H1 (cell line): ENCODE measurements at regions of chr17 and their contacts with region 1.

Region 1: GRCh38 chr17:57747221-57748017 is 2.3 kb upstream of the CCDC182 start:
- DNase-seq: no peak
- H3K4me3 ChIP-seq: no peak overlapping the region
- H3K27ac ChIP-seq: no peak overlapping the region
- H3K4me1 ChIP-seq: peaks cover 0 to 2% (median 0%) of the 10 kb centered on the region in 4 experiments; a peak in 1 of 7 replicates
- H3K27me3 ChIP-seq: no peaks in the 10 kb centered on the region
- CTCF ChIP-seq: peak; percentile 48 to 76 (median 69)
- EP300 ChIP-seq: no peak
- POLR2A ChIP-seq: no peak
- RAD21 ChIP-seq: peak; percentile 88 to 89

Region 2: DNA sequence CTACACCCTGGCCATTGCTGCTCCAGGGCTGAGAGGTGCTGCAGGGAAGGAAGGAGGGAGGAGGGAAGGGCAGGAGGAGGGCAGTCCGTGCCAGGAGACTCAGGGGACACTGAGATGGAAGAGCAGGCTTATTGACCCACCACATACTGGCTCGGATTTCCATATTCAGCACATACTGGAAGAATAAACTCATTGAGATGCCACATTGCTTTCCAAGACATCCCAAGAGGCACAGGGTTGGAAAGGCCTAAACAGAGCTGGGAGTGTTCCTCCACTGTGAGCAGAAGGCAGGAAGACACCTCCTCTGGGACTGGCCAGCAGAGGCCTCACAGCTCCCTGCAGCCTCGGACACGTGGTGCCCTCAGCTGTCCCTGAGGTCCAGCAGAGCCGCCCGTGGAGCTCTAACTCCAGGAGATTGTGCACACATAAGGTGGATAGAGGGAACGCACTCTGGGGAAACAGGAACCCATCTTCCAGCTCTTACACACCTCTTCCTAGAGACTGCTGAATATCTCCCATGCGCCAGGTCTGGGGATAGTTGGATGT is 19.7 kb before region 1 on chr17:
- CTCF ChIA-PET with region 1: interaction called, 15 read pairs
- POLR2A ChIA-PET with region 1: interaction called, 4 read pairs
- DNase-seq: no peak
- H3K4me3 ChIP-seq: no peak overlapping the region
- H3K27ac ChIP-seq: no peak overlapping the region
- H3K4me1 ChIP-seq: no peaks in the 10 kb centered on the region; a peak in 1 of 7 replicates
- H3K27me3 ChIP-seq: no peaks in the 10 kb centered on the region; a peak in 1 of 7 replicates
- CTCF ChIP-seq: no peak
- EP300 ChIP-seq: no peak
- POLR2A ChIP-seq: no peak
- RAD21 ChIP-seq: no peak

Region 3: GRCh38 chr17:57761887-57762286 is 14.5 kb after region 1 on chr17:
- CTCF ChIA-PET with region 1: interaction called, 11 read pairs
- POLR2A ChIA-PET with region 1: no interaction called
- DNase-seq: no peak
- H3K4me3 ChIP-seq: peak overlapping the region in 1 of 4 experiments; percentile 10; a peak in 2 of 8 replicates
- H3K27ac ChIP-seq: no peak overlapping the region
- H3K4me1 ChIP-seq: peaks cover 3 to 12% (median 7%) of the 10 kb centered on the region in 4 experiments
- H3K27me3 ChIP-seq: no peaks in the 10 kb centered on the region
- CTCF ChIP-seq: peak in 1 of 3 experiments; percentile 17; a peak in 1 of 4 replicates
- EP300 ChIP-seq: no peak
- POLR2A ChIP-seq: no peak
- RAD21 ChIP-seq: no peak